ENCODE measurements at regions of chr14 and their contacts with region 1.

Region 1: GRCh38 chr14:60561845-60562746 is 53.1 kb downstream of the SIX6 start:
- DNase-seq: no peak
- ATAC-seq: peak; percentile 81

Region 2: DNA sequence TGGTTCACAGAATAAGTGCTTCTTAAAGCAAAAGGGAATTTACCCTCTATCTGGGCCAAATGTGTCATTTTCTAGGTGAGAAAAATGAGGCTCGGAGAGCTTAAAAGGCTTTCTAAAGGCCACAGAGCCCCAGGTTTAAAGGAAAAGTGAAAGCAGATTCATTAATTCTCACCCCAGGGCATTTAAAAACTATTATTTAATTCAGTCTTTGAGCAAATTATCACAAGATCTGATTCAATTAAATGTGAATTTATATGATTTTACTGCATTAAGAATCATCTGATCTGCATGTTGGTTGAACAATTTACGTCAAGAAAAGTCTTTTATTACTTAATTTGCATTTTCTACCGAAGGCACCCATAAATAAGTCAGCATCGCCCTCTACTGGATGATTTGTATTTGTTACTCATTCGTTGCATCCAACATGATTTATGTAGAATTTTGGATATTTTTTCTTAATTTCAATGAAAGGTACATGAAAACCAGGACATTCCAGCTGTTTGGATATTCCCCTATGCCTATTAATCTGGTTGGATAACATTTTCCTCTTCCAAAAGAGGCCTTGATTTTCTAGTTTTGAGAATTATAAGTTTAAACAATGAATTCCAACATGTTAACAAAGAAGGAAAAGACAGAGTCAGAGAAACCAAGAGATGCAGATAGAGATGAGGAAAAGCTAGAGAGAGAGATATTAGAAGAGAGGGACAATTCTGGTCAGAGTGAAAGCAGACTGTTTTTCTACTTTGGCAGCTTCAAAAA is 377.8 kb before region 1 on chr14:
- intact Hi-C with region 1: loop called (anchors 2 kb)
- DNase-seq: no peak
- ATAC-seq: no peak

Region 3: DNA sequence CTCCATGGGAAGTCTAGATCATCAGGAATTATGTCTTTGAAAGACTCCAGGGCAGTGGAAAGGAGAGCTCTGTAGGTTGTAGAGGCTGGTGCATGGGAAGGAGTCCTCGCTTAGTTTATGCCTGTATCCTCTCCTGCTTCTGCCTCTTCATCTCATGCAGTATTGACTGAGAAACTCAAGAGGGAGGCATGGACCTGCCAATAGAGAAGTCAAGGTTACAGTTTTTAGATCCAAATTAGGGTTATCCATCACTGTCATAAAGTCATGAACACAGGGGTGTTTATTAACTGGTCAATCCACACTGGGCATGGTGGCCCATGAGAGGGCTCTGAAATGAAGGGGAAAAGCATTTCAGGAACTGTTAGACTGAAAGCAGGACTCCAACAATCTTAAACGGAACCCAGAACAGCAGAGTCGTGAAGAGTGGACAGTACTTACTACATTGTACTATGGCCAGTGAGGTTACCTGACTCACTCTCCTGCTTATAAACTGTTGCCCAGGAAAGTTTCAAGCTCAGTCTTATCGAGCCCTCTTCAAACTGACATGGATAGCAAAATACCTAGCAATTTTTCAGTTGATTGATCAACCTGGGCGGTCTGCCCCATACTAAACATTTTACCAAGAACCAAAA is 366.8 kb before region 1 on chr14:
- intact Hi-C with region 1: loop called (anchors 2 kb)
- DNase-seq: no peak
- ATAC-seq: no peak

Region 4: GRCh38 chr14:60349663-60350365 is 212.3 kb before region 1 on chr14:
- intact Hi-C with region 1: loop called (anchors 5 kb)
- DNase-seq: no peak
- ATAC-seq: peak; percentile 54

Region 5: DNA sequence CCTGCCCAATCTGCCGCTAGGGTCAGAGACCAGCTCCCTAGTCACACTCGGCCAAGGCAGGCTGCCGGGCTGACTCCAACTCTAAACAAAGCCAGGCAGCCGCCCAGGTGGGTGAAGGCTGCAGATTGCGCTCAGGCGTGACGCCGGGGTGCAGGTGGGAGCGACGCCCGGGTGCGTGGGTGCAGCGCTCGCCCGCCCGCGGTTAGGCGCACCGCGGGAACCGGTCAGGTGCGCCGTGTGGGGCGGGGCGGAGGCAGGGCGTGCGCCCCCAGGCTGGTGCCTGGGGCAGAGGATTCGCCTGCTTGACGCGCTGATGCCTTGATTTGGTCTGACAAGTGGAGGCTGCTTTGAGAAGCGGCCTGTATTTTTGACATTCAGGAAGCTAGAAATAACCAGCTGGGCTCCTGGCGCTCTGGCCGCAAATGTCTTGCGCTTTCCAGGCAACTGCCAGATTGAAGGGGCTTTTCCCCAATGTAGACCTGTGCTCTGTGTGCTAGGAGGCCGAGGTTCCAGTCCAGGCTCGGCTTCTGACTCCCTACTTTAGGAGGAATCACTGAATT is 1006.6 kb after region 1 on chr14:
- intact Hi-C with region 1: loop called (anchors 5 kb)
- DNase-seq: peak; percentile 69
- ATAC-seq: peak; percentile 51